Activated T-helper 1 cell treated with anti-CD3 and anti-CD28 coated beads, Interleukin-12 subunit alpha, Interleukin-12 subunit beta, Interleukin-2, Interleukin-4 antibody, amounts not matched to agents 30 ng/mL and 10 ng/mL and 1 ng/mL, durations not matched to agents 14 hours and 24 hours and 36 hours (primary cell): ENCODE measurements at regions of chr17 and their contacts with region 1.

Region 1: DNA sequence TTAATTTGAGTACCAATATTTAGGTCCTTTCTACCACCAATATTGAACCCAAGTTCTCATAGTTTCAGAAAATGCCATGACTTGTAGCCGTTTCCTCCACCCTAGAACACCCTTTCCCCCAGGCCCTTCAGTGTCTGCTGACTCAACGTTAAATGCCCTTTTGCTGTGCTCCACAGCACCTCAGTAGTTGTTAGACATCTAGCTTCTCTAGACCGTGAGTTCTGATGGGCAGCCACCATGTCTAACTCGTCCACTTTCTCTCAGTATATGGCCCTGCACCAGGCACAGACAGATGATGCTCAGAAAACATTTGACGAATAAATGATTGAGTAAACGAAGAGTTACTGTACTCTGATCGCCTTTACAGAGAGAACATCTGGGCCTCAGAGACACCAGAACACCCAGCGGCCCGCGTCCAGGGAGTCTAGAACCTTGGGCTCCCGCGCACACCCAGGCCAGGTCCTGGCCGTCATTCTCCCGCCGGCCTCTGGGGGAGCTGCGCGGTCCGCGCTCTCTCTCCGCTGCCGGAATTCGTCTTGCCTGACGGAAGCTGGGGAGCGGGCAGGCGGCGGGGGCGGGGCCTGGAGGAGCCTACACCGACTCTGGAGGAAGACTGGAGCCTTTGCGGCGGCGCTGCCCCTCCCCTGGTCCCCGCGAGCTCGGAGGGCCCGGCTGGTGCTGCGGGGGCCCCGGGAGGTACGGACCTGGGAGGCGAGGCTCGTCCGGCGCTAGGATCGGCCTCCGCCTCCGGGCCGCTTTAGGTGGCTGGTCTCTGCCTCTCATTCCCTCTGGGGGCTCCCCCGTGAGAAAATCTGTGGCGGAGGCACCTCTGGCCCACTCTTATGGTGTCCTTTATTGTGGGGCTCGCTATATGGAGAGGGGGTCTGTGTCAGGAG is at the start of gene NKIRAS2:
- DNase-seq: peak; percentile 93
- H3K4me3 Mint-ChIP-seq: peak within 1 kb of the TSS; percentile 100
- H3K27ac Mint-ChIP-seq: peak within 1 kb of the TSS; percentile 81
- H3K4me1 Mint-ChIP-seq: peaks cover 53% of the 10 kb centered on the region
- H3K27me3 Mint-ChIP-seq: no peaks in the 10 kb centered on the region
- total RNA-seq, gene NKIRAS2: 32.6 and 36.3 TPM in 2 replicates

Region 2: DNA sequence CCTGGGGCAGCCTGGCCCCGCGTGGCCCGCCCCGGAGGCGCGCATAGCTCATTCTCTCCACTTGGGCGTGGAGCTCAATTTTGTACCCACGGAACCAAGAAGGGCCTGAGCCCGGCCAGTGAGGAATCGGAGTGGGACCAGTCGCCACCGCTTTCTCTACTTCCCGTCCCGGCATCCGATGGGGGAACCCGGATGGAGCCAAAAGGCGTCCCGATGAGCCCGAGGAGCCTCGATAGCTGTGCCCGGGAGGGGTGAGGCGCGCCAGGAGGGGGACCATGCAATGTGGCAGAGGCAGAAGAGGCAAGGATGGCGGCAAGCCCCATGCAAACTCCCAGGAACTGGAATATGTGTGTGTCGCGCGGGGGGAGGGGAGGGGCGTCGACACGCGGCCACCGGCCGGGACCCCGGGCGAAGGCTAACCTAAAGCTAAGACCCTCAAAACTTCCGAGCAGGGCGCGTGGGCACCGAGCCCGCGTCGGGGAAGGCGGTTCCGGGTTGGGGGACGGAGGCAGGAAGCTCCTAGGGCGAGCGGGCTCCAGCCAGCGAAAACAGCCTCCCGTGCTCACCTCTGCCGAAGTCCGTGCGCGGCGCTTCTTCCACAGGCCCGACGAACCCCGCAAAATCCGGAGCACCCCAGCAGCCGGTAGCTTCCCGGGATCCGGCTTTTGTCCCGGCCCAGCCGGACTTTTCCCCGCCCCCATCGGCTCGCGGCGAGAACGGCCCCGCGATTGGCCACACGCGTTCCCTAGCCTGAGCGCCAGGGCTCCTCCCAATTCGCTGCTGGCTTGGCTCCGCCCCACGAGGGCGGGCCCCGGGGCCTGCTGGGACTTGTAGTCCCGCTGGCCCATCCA is 101.2 kb before region 1 on chr17 and contains the start of gene ACLY:
- intact Hi-C with region 1: loop called (anchors 1 kb)
- DNase-seq: peak; percentile 98
- H3K4me3 Mint-ChIP-seq: peak within 1 kb of the TSS; percentile 95
- H3K27ac Mint-ChIP-seq: peak within 1 kb of the TSS; percentile 90
- H3K4me1 Mint-ChIP-seq: peaks cover 32% of the 10 kb centered on the region
- H3K27me3 Mint-ChIP-seq: no peaks in the 10 kb centered on the region
- total RNA-seq, gene ACLY: 200 and 211 TPM in 2 replicates

Region 3: DNA sequence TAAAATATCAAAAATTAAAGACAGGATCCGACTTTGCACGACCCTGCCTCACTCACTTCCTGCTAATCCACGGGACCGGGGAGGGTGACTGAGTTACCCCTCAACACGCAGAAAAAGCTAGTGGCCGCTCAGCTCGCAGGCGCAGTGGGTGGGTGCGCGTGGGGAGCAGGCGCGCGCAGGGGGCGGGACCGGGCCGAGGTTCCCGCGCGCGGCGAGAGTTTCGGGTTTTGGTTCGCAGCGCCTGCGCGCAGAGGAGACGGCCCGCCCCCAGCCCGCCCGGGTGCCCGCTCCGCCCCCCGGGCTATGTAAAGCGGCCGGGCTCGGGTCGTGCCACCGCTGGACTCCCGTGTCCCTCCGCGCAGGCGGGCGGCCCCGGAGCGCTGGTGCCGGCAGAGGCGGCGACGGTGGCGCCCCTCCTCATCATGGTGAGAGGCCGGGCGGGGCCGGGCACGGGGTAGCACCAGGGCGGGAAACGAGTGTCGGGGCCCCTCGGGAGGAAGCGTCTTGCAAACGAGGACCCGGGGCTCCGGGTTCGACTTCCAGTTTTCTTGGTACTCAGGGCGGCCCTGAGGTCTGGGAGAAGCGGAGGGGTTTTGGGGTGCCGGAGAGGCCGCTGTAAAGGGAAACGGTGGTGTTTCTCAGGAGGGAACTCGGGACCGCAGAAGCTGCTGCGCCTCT is 53.2 kb before region 1 on chr17 and contains the start of gene CNP:
- intact Hi-C with region 1: loop called (anchors 1 kb)
- DNase-seq: peak; percentile 87
- H3K4me3 Mint-ChIP-seq: peak within 1 kb of the TSS; percentile 87
- H3K27ac Mint-ChIP-seq: peak within 1 kb of the TSS; percentile 82
- H3K4me1 Mint-ChIP-seq: peaks cover 29% of the 10 kb centered on the region
- H3K27me3 Mint-ChIP-seq: no peaks in the 10 kb centered on the region
- total RNA-seq, gene CNP: 89.1 and 89.8 TPM in 2 replicates

Region 4: DNA sequence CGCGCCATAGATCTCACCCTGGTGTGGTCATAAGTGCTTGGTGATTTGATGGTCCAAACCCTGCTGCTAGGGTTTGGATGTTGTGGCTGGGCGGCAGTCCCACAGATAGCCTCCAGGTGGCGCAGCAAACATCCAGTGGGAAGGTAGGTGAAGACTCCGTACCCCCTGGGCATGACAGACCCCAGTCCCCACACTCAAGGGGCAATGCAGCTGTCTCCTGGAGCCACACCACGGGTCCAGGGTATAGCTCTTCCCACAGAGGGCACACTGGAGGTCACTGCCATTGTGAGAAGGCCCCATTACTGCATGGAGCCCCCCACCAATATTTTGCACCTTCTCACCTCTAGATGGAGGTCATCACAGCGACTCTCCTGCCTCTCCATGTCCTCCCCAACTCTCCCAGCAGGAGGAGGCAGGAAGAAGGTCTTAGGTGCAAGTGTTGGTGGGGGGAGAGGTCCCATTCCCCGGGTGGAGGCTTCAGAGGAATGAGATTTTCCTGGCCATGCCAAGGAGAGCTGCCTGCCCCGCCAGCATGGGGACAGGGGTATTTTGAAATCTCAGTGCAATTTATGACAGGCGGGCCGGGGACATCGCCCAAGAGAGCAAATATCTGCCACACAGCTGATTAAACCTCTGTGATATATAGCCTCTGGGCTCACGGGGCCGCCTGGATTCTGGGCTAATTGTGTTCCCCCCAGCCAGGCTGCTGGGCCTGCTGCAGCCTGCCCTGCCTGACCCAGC is 47.8 kb after region 1 on chr17:
- intact Hi-C with region 1: no loop called
- DNase-seq: peak; percentile 53
- H3K4me3 Mint-ChIP-seq: no peak overlapping the region
- H3K27ac Mint-ChIP-seq: no peak overlapping the region
- H3K4me1 Mint-ChIP-seq: peaks cover 33% of the 10 kb centered on the region
- H3K27me3 Mint-ChIP-seq: peaks cover 13% of the 10 kb centered on the region

Region 5: GRCh38 chr17:42120770-42121769 is 101.3 kb after region 1 on chr17 and contains the start of gene KAT2A:
- intact Hi-C with region 1: loop called (anchors 1 kb)
- DNase-seq: peak; percentile 68
- H3K4me3 Mint-ChIP-seq: peak within 1 kb of the TSS; percentile 81
- H3K27ac Mint-ChIP-seq: peak within 1 kb of the TSS; percentile 86
- H3K4me1 Mint-ChIP-seq: peaks cover 36% of the 10 kb centered on the region
- H3K27me3 Mint-ChIP-seq: no peaks in the 10 kb centered on the region
- total RNA-seq, gene KAT2A: 70.8 and 76.9 TPM in 2 replicates

Region 6: GRCh38 chr17:42266918-42267778 is 247.4 kb after region 1 on chr17:
- intact Hi-C with region 1: loop called (anchors 1 kb)
- DNase-seq: peak; percentile 52
- H3K4me3 Mint-ChIP-seq: peak overlapping the region; percentile 73
- H3K27ac Mint-ChIP-seq: peak overlapping the region; percentile 98
- H3K4me1 Mint-ChIP-seq: peaks cover 67% of the 10 kb centered on the region
- H3K27me3 Mint-ChIP-seq: no peaks in the 10 kb centered on the region